ENCODE measurements at regions of chr16 and their contacts with region 1.

Region 1: GRCh38 chr16:28277537-28278388 is 14.6 kb upstream of the SBK1 start:
- DNase-seq: peak; percentile 7
- H3K4me3 ChIP-seq: peak overlapping the region; percentile 58
- CTCF ChIP-seq: peak; percentile 95

Region 2: DNA sequence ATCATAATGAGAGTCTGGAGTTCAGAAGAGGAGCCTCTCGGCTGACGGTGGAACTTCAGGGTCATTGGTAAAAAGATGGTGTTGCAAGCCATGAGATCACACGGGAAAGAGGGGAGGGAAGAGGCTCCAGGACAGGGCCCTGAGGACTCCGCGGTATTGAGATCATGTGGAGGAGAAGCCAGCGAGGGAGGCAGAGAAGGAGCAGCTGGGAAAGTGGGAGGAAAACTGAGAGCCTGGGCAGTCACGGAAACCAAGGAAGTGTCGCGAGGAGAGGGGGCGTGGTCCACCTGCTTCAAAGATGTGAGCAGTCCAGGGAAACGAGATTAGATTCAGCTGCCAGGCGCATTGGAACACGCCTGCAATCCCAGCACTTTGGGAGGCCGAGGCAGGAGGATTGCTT is 13.1 kb before region 1 on chr16:
- CTCF ChIA-PET with region 1: interaction called, 52 read pairs
- POLR2A ChIA-PET with region 1: no interaction called
- DNase-seq: no peak
- H3K4me3 ChIP-seq: no peak overlapping the region
- CTCF ChIP-seq: no peak

Region 3: GRCh38 chr16:28291873-28292660 is 14.3 kb after region 1 on chr16 and contains the start of gene SBK1:
- CTCF ChIA-PET with region 1: interaction called, 23 read pairs
- POLR2A ChIA-PET with region 1: no interaction called
- DNase-seq: no peak
- H3K4me3 ChIP-seq: peak within 1 kb of the TSS; percentile 50
- CTCF ChIP-seq: no peak

Region 4: GRCh38 chr16:28311913-28312312 is 34.1 kb after region 1 on chr16:
- CTCF ChIA-PET with region 1: interaction called, 119 read pairs
- POLR2A ChIA-PET with region 1: no interaction called
- DNase-seq: no peak
- H3K4me3 ChIP-seq: no peak overlapping the region
- CTCF ChIP-seq: no peak

Region 5: GRCh38 chr16:28317040-28317880 is 39.5 kb after region 1 on chr16:
- CTCF ChIA-PET with region 1: interaction called, 119 read pairs
- POLR2A ChIA-PET with region 1: no interaction called
- DNase-seq: no peak
- H3K4me3 ChIP-seq: no peak overlapping the region
- CTCF ChIP-seq: peak; percentile 83

Region 6: DNA sequence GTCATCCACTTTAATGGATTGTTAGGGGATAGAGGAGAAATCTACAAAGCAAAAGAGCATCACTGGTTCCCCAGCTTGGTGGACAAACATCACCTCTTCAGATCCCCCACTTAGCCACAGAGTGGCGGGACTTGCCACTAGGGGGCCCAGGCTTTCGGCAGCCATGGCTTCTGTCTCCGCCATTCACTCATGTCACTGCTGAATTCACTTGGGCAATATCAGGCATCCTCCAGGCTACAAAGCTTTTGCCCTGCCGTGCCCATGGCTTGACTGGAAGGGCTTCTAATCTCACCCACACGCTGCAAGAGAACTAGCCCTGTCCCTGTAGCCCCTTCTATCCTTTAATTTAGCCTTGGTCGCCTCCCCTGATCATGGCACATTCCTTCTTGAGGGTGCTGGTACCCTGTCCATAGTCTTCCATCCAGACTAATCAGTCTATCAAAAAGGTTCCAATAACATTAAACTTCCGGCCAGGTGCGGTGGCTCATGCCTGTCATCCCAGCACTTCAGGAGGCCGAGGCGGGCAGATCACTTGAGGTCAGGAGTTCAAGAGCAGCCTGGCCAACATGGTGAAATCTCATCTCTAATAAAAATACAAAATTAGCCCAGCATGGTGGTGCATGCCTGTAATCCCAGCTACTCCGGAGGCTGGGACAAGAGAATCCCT is 49.3 kb after region 1 on chr16:
- CTCF ChIA-PET with region 1: interaction called, 119 read pairs
- POLR2A ChIA-PET with region 1: no interaction called
- DNase-seq: no peak
- H3K4me3 ChIP-seq: no peak overlapping the region
- CTCF ChIP-seq: peak; percentile 87

Region 7: DNA sequence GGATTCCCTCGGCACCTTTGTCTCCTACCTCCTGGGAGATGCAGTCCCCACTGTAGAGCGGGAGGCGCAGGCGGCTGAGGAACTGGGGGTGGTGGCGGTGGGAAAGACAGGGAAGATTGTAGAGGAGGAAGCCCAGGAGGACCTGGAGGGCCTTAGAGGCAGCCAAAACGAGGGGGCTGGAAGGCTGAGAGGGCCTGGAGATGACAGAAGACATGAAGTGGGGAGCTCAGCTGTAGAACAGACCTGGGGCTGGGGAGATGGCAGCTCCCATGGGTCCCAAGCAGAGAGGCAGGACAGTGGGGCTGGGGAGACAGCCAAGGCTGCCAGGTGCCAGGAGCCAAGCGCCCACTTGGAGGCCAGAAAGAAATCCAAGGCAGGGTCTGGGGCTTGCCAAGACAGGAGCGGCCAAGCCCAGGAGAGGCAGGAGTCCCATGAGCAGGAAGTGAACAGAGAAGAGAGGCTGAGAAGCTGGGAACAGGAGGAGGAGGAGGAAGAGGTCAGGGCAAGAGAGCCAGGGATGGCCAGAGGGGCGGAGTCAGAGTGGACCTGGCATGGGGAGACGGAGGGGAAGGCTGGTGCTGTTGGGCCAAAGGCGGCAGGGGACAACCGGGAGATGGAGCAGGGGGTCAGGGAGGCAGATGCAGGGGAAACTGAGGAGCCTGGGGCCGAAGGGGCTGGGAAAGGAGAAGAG is 217.5 kb after region 1 on chr16:
- CTCF ChIA-PET with region 1: no interaction called
- POLR2A ChIA-PET with region 1: no interaction called
- DNase-seq: no peak
- H3K4me3 ChIP-seq: no peak overlapping the region
- CTCF ChIP-seq: no peak

Measured in AG04449 (cell line).